ENCODE measurements at regions of chr15 and their contacts with region 1.

Region 1: GRCh38 chr15:86813907-86814306 is 734.2 kb downstream of the AGBL1 start:
- DNase-seq: no peak
- H3K4me3 Mint-ChIP-seq: no peak overlapping the region
- H3K27ac Mint-ChIP-seq: no peak overlapping the region
- H3K4me1 Mint-ChIP-seq: no peaks in the 10 kb centered on the region
- H3K27me3 Mint-ChIP-seq: no peaks in the 10 kb centered on the region
- CTCF ChIP-seq: no peak

Region 2: DNA sequence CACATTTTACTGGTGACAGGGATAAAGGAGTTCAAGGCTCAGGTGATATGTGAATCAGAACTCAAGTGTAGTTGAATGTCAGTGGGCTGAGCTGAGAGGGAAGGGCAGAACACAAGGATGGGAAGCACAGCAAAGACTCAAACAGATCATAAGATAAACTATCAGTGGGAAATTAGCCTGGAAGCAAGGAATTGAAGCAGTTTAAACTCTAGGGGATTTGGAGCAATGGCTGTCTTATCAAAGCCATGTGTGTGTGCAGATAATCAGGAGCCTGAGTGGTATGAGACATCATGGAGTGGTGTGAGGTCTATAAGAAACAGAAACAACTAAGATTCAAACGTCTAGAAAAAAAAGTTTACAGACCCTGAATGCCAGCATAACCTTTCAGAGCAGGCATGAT is 99.7 kb before region 1 on chr15:
- CTCF ChIA-PET with region 1: no interaction called
- intact Hi-C with region 1: no loop called
- DNase-seq: no peak
- H3K4me3 Mint-ChIP-seq: no peak overlapping the region
- H3K27ac Mint-ChIP-seq: no peak overlapping the region
- H3K4me1 Mint-ChIP-seq: no peaks in the 10 kb centered on the region
- H3K27me3 Mint-ChIP-seq: no peaks in the 10 kb centered on the region
- CTCF ChIP-seq: no peak

Region 3: GRCh38 chr15:86773736-86774135 is 40.2 kb before region 1 on chr15:
- CTCF ChIA-PET with region 1: interaction called, 11 read pairs
- intact Hi-C with region 1: no loop called
- DNase-seq: no peak
- H3K4me3 Mint-ChIP-seq: no peak overlapping the region
- H3K27ac Mint-ChIP-seq: no peak overlapping the region
- H3K4me1 Mint-ChIP-seq: no peaks in the 10 kb centered on the region
- H3K27me3 Mint-ChIP-seq: no peaks in the 10 kb centered on the region
- CTCF ChIP-seq: no peak

Region 4: DNA sequence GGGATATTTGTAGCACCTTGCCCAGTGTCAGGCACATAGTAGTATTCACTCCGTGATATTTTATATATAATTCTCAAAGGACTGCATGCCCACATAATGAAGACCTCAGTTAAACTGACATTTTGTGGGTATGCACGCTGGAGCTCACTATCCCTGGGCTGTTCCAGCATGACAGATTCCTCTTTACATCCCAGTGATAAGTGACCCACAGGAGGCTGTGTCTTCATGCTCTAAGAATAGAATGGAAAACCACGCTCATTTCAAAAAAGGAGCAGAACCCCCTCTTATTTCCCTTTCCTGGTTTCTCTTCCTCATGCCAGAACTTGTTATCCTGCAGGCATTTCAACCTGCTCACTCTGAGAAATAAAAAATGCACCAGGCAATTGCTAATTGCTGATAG is 16.8 kb before region 1 on chr15:
- CTCF ChIA-PET with region 1: no interaction called
- intact Hi-C with region 1: no loop called
- DNase-seq: no peak
- H3K4me3 Mint-ChIP-seq: no peak overlapping the region
- H3K27ac Mint-ChIP-seq: no peak overlapping the region
- H3K4me1 Mint-ChIP-seq: no peaks in the 10 kb centered on the region
- H3K27me3 Mint-ChIP-seq: no peaks in the 10 kb centered on the region
- CTCF ChIP-seq: no peak